Cardiac septum (tissue), 1 donor: ENCODE measurements at regions of chr21 and their contacts with region 1.

Region 1: DNA sequence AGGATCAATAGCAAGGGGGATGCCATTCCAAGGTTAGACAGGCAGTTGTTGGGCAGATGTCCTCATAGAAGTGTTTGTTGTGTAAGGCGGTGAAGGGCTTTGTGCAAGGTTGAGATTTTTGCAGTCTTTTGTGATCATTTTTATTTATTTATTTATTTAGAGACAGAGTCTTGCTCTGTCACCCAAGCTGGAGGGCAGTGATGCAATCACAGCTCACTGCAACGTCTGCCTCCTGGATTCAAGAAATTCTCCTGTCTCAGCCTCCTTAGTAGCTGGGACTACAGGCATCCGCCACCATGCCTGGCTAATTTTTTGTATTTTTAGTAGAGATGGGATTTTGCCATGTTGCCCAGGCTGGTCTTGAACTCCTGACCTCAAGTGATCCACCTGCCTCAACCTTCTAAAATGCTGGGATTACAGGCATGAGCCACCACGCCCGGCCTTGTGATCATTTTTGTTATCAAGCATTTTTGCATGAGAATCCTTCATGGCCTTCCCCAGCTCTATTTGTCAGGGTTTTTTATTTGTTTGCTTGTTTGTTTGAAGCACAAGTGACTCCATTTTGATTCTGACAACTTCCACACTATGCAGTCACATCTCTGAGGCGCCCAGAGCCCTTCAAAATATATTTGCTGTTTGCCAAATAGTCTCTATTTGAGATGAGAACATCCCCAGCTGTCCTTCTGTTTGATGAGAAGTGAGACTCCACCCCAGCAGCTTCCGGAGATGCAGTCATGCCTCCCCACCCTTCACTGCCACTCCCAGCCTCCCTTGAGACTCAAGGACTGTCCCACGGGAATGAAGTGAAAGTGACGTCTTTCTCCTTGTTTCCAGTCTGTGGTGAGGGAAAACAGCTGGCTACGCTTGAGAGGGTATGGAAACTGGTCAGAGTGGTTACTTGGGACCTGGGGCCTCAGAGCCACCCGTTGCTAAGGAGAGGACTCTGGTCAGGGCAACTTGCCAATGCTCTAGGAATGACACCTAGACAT is 38.0 kb downstream of the TMEM50B start:
- DNase-seq: no peak

Region 2: GRCh38 chr21:32940079-32941014 is 501.4 kb before region 1 on chr21:
- intact Hi-C with region 1: loop called (anchors 10 kb)
- DNase-seq: no peak

Region 3: GRCh38 chr21:33278721-33279120 is 163.1 kb before region 1 on chr21:
- intact Hi-C with region 1: no loop called
- DNase-seq: no peak

Region 4: GRCh38 chr21:33403779-33404585 is 37.8 kb before region 1 on chr21:
- intact Hi-C with region 1: loop called (anchors 5 kb)
- DNase-seq: peak; percentile 81